Breast epithelium (tissue), 4 donors: ENCODE measurements at regions of chr6 and their contacts with region 1.

Region 1: DNA sequence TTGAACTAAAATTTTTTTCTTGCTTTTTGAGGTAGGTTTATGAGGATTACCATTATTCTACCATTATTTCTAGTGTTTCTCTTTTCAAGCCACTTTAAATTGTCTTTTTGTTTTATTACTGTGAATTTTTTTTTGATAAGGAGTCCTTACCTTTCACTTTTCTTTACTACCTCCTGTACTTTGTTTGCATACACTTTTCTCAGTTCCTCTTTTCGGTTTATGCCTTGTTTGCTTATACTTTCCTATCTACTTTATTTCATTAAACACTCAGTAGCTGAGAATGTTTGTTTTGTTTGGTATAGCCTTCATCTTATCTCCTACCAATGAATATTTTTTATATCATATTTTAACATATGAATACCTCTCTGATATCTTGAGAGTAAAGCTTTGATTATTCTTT is 147.9 kb downstream of the TFAP2B start:
- DNase-seq: no peak
- H3K4me3 ChIP-seq: no peak overlapping the region
- H3K27ac ChIP-seq: no peak overlapping the region
- H3K4me1 ChIP-seq: no peaks in the 10 kb centered on the region
- H3K27me3 ChIP-seq: no peaks in the 10 kb centered on the region
- CTCF ChIP-seq: no peak
- POLR2A ChIP-seq: no peak

Region 2: DNA sequence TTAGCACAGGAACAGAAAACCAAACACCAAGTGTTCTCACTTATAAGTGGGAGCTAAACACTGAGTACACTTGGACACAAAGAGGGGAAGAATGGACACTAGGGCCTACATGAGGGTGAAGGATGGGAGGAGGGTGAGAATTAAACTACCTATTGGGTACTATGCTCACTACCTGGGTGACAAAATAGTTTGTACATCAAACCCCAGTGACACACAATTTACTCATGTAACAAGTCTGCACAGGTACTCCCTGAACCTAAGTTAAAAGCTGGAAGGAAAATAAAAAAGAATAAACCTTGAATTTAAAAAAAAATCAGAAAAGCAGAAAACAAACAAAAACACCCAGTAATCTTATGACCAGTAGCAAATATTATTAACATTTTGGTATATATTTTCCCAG is 40.7 kb after region 1 on chr6:
- intact Hi-C with region 1: loop called (anchors 5 kb)
- DNase-seq: no peak
- H3K4me3 ChIP-seq: no peak overlapping the region
- H3K27ac ChIP-seq: no peak overlapping the region
- H3K4me1 ChIP-seq: no peaks in the 10 kb centered on the region
- H3K27me3 ChIP-seq: no peaks in the 10 kb centered on the region
- CTCF ChIP-seq: no peak
- POLR2A ChIP-seq: no peak